ENCODE measurements at regions of chr9 and their contacts with region 1.

Region 1: GRCh38 chr9:114291064-114291474 is 31.8 kb upstream of the ORM1 start:
- DNase-seq: peak; percentile 57 to 64
- ATAC-seq: peak; percentile 32 to 69; a peak in 4 of 6 replicates
- H3K4me3 ChIP-seq: no peak overlapping the region
- H3K27ac ChIP-seq: peak overlapping the region; percentile 63 to 88
- H3K4me1 ChIP-seq: peaks cover 39% of the 10 kb centered on the region
- CTCF ChIP-seq: peak; percentile 91
- EP300 ChIP-seq: no peak
- POLR2A ChIP-seq: no peak
- RAD21 ChIP-seq: peak; percentile 94 to 96

Region 2: DNA sequence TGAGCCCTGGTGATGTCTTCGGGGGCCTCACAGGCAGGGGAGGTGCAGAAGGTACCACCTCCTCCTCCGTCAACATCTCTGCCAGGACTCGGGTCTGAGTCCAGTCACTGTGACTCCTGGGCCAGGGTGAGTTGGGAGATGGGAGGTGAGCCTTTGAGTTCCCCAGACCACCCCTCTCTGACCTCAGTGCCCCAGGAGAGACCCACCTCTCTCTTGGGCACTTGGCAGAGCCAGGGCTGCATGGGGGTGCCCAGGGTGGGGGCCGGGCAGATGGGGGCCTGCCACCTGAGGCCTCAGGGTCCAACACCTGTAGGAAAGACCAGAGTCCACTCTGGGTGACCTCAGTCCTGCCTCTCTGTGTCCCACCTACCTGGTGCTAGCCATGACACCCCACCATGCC is 198.7 kb before region 1 on chr9:
- CTCF ChIA-PET with region 1: interaction called, 24 read pairs
- POLR2A ChIA-PET with region 1: no interaction called
- DNase-seq: no peak
- ATAC-seq: no peak
- H3K4me3 ChIP-seq: no peak overlapping the region
- H3K27ac ChIP-seq: no peak overlapping the region
- H3K4me1 ChIP-seq: peaks cover 3% of the 10 kb centered on the region; the same call in 1 of the 3 replicates
- CTCF ChIP-seq: no peak
- EP300 ChIP-seq: no peak
- POLR2A ChIP-seq: no peak
- RAD21 ChIP-seq: no peak

Region 3: GRCh38 chr9:114131808-114132549 is 159.1 kb before region 1 on chr9:
- CTCF ChIA-PET with region 1: interaction called, 10 read pairs
- POLR2A ChIA-PET with region 1: no interaction called
- DNase-seq: no peak
- ATAC-seq: no peak
- H3K4me3 ChIP-seq: no peak overlapping the region
- H3K27ac ChIP-seq: no peak overlapping the region
- H3K4me1 ChIP-seq: no peaks in the 10 kb centered on the region
- CTCF ChIP-seq: no peak
- EP300 ChIP-seq: no peak
- POLR2A ChIP-seq: no peak
- RAD21 ChIP-seq: no peak

Region 4: GRCh38 chr9:114169029-114169951 is 121.8 kb before region 1 on chr9:
- CTCF ChIA-PET with region 1: interaction called, 21 read pairs
- POLR2A ChIA-PET with region 1: no interaction called
- DNase-seq: no peak
- ATAC-seq: no peak; a peak in 1 of 6 replicates
- H3K4me3 ChIP-seq: no peak overlapping the region
- H3K27ac ChIP-seq: no peak overlapping the region
- H3K4me1 ChIP-seq: peaks cover 3% of the 10 kb centered on the region
- CTCF ChIP-seq: no peak
- EP300 ChIP-seq: no peak
- POLR2A ChIP-seq: no peak
- RAD21 ChIP-seq: no peak

Region 5: GRCh38 chr9:114184074-114184473 is 107.0 kb before region 1 on chr9:
- CTCF ChIA-PET with region 1: interaction called, 20 read pairs
- POLR2A ChIA-PET with region 1: no interaction called
- DNase-seq: no peak
- ATAC-seq: peak; percentile 33 to 38; a peak in 3 of 6 replicates
- H3K4me3 ChIP-seq: no peak overlapping the region
- H3K27ac ChIP-seq: no peak overlapping the region
- H3K4me1 ChIP-seq: no peaks in the 10 kb centered on the region
- CTCF ChIP-seq: no peak
- EP300 ChIP-seq: no peak
- POLR2A ChIP-seq: no peak
- RAD21 ChIP-seq: no peak

Region 6: DNA sequence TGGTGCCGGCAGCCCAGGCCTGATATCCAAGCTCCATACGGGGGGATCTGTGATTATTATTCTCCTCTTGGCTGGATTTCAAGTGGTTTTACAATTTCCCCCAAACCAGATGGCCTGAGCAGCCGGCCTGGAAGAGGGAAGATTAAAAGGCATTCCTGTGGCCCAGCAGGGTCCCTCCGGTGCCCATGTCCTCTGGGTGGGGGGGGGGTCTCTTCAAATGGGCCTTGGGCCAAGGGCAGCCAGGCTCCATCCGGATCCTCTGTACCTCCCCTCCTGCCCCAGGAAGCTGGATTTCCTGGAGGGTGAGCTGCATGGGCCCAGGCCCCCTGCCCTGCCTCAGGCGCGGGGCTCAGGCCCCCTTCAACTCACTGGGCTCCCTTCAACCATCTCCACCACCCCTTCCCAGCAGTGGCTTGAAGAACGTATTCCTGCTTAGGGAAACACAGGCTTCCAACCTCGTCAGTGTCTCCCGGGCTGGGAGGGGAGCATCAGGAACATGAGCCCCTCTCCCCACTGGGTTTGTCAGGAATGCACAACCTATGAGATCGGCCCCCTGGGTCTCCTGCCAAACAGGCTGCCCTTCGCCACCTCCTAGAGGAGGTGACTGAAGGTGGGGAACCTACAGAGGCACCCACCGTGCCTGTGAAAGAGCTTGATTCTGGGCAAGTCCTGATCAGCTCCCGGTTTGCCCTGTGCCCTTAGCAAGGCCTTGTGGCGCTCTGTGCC is 31.1 kb before region 1 on chr9:
- CTCF ChIA-PET with region 1: interaction called, 29 read pairs
- POLR2A ChIA-PET with region 1: no interaction called
- DNase-seq: no peak
- ATAC-seq: no peak
- H3K4me3 ChIP-seq: no peak overlapping the region
- H3K27ac ChIP-seq: no peak overlapping the region
- H3K4me1 ChIP-seq: no peaks in the 10 kb centered on the region
- CTCF ChIP-seq: no peak
- EP300 ChIP-seq: no peak
- POLR2A ChIP-seq: no peak
- RAD21 ChIP-seq: no peak

Measured in A549 (cell line).